ENCODE measurements at regions of chr1 and their contacts with region 1.

Region 1: DNA sequence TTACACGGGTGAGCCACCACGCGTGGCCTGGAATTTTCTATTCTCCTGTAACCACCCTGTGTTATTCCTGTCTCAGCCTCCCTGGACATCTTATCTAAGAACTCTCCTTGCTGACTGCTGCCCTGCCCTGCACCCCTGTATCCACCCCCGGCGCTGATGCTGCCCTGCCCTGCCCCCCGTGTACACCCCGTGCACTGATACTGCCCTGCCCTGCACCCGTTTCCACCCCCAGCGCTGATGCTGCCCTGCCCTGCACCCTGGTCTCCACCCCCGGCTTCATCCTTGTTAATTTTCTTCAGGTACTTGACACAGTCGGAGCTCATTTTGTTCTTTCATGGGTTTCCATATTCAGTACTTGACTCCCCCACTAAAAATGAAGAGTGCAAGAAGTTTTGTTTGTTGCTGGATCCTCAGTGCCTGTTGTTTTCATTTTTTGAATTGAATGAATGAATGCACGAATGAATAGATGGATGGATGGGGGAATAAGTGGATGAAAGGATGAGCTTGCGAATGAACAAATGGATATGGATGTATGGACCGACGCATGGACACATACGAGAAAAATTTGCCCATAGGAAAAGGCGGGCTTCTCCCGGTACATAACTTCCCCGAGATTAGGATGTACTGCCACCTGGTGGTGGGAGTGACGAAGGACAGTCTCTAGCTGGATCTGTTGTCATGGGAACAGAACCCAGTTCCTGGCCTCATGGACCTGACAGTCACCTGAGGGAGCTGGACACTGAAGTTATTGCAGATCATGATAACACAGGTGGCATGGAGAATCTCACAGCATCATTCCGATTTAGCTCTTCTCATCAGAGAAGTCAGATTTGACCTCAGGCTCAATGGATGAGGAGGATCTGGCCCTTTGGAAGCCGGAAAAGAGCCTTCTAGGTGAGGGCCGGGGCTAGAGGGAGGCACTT is 14.9 kb downstream of the AADACL4 start:
- DNase-seq: peak; percentile 60 to 73 (median 64)
- ATAC-seq: peak; percentile 65 to 88 (median 86)
- H3K4me3 ChIP-seq: no peak overlapping the region
- H3K27ac ChIP-seq: no peak overlapping the region
- H3K4me1 ChIP-seq: peaks cover 0 to 6% (median 1%) of the 10 kb centered on the region in 12 donors
- H3K27me3 ChIP-seq: no peaks in the 10 kb centered on the region
- CTCF ChIP-seq: peak; percentile 93 to 99 (median 96)
- POLR2A ChIP-seq: no peak

Region 2: GRCh38 chr1:12275369-12275768 is 383.4 kb before region 1 on chr1:
- intact Hi-C with region 1: loop called in 7 of 10 experiments (anchors 5 to 10 kb)
- DNase-seq: peak in 1 of 5 donors; percentile 42
- ATAC-seq: peak in 1 of 4 donors; percentile 32
- H3K4me3 ChIP-seq: no peak overlapping the region
- H3K27ac ChIP-seq: no peak overlapping the region
- H3K4me1 ChIP-seq: peaks cover 0 to 15% (median 0%) of the 10 kb centered on the region in 12 donors
- H3K27me3 ChIP-seq: no peaks in the 10 kb centered on the region
- CTCF ChIP-seq: peak; percentile 32 to 71 (median 58)
- POLR2A ChIP-seq: no peak

Region 3: GRCh38 chr1:12314333-12314903 is 344.4 kb before region 1 on chr1:
- intact Hi-C with region 1: loop called (anchors 1 to 5 kb)
- DNase-seq: no peak
- ATAC-seq: peak in 2 of 4 donors; percentile 19 to 56
- H3K4me3 ChIP-seq: no peak overlapping the region
- H3K27ac ChIP-seq: peak overlapping the region in 2 of 12 donors; percentile 11 to 67
- H3K4me1 ChIP-seq: peaks cover 0 to 20% (median 10%) of the 10 kb centered on the region in 12 donors
- H3K27me3 ChIP-seq: no peaks in the 10 kb centered on the region
- CTCF ChIP-seq: peak; percentile 10 to 70 (median 54)
- POLR2A ChIP-seq: no peak